ENCODE measurements at regions of chr1 and their contacts with region 1.

Region 1: GRCh38 chr1:28581536-28582247 is 10.4 kb upstream of the RAB42 start:
- DNase-seq: peak; percentile 93
- H3K4me3 Mint-ChIP-seq: peak overlapping the region; percentile 91
- H3K27ac Mint-ChIP-seq: peak overlapping the region; percentile 92
- H3K4me1 Mint-ChIP-seq: peaks cover 15% of the 10 kb centered on the region
- H3K27me3 Mint-ChIP-seq: no peaks in the 10 kb centered on the region
- CTCF ChIP-seq: no peak

Region 2: GRCh38 chr1:28437934-28438699 is 143.6 kb before region 1 on chr1:
- CTCF ChIA-PET with region 1: no interaction called
- POLR2A ChIA-PET with region 1: interaction called, 17 read pairs
- intact Hi-C with region 1: no loop called
- DNase-seq: peak; percentile 98
- H3K4me3 Mint-ChIP-seq: peak overlapping the region; percentile 89
- H3K27ac Mint-ChIP-seq: peak overlapping the region; percentile 93
- H3K4me1 Mint-ChIP-seq: peaks cover 21% of the 10 kb centered on the region
- H3K27me3 Mint-ChIP-seq: no peaks in the 10 kb centered on the region
- CTCF ChIP-seq: no peak

Region 3: GRCh38 chr1:28552758-28553663 is 28.7 kb before region 1 on chr1 and contains the start of gene TRNAU1AP:
- CTCF ChIA-PET with region 1: interaction called, 3 read pairs
- POLR2A ChIA-PET with region 1: interaction called, 107 read pairs
- intact Hi-C with region 1: loop called (anchors 2 kb)
- DNase-seq: peak; percentile 95
- H3K4me3 Mint-ChIP-seq: peak within 1 kb of the TSS; percentile 100
- H3K27ac Mint-ChIP-seq: peak within 1 kb of the TSS; percentile 97
- H3K4me1 Mint-ChIP-seq: no peaks in the 10 kb centered on the region
- H3K27me3 Mint-ChIP-seq: no peaks in the 10 kb centered on the region
- CTCF ChIP-seq: no peak
- total RNA-seq, gene TRNAU1AP: 28.2 and 33.4 TPM in 2 replicates

Region 4: GRCh38 chr1:28602536-28603439 is 21.1 kb after region 1 on chr1:
- CTCF ChIA-PET with region 1: interaction called, 28 read pairs
- POLR2A ChIA-PET with region 1: interaction called, 64 read pairs
- intact Hi-C with region 1: loop called (anchors 2 kb)
- DNase-seq: peak; percentile 87
- H3K4me3 Mint-ChIP-seq: no peak overlapping the region
- H3K27ac Mint-ChIP-seq: no peak overlapping the region
- H3K4me1 Mint-ChIP-seq: peaks cover 10% of the 10 kb centered on the region
- H3K27me3 Mint-ChIP-seq: no peaks in the 10 kb centered on the region
- CTCF ChIP-seq: peak; percentile 76

Region 5: DNA sequence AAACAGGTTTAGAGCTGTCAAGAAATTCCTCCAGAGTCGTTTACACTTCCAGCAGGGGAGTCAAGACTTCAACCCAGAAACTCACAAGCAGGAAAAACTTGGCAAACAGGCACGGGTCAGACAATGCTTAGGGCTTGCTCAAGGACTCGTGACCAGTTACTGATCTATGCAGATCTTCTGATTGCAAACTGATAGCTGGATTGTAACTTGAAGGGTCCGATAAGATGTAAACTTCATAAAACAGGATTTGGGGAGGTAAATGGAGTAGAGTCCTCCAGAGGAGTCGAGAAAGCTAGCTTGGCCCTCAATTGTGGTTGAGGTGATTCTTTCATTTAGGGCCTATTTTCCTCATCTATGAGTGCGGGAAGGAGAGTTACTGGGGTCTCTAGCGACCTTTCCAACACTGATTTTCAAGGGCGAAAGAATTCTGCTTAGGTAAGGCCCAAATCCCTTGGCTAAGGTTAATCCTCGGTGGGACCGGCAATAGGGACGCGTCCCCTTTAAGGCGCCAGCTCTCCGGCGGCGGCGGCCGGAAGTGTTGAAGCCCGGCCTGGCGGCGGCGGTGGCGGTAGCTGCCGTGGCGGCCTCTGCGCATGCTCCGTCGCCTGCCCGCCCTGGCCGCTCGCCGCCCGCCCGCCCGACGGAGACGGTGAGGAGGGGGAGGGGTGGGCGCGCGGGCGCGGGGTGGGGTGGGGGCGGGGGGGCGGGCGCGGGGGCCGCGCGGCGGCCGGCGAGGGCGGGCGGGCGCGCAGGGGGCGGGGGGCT is 86.7 kb after region 1 on chr1 and contains the start of gene GMEB1:
- CTCF ChIA-PET with region 1: no interaction called
- POLR2A ChIA-PET with region 1: interaction called, 17 read pairs
- intact Hi-C with region 1: no loop called
- DNase-seq: peak; percentile 88
- H3K4me3 Mint-ChIP-seq: peak within 1 kb of the TSS; percentile 87
- H3K27ac Mint-ChIP-seq: peak within 1 kb of the TSS; percentile 90
- H3K4me1 Mint-ChIP-seq: peaks cover 13% of the 10 kb centered on the region
- H3K27me3 Mint-ChIP-seq: no peaks in the 10 kb centered on the region
- CTCF ChIP-seq: no peak
- total RNA-seq, gene GMEB1: 9.1 and 13.3 TPM in 2 replicates